Breast epithelium (tissue), 4 donors: ENCODE measurements at regions of chr14 and their contacts with region 1.

Region 1: DNA sequence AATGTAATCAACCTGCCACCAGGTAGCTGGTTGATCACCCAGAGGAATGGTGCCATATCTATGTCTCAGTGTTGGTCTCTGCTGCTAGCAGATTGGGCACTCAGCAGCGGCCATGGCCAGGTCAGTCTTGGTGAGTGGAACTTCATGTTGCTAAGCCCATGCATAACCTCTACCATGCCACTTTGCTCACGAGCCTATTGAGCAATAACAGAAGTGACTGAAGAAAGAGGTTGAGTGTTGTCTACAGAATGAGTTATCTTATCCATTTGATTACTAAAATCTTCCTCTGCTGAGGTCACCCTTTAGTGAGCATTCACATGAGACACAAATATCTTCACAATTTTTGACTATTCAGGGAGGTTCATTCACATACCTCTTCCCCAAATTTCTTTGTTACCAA is 1224.6 kb downstream of the FSCB start:
- DNase-seq: no peak
- H3K4me3 ChIP-seq: no peak overlapping the region
- H3K27ac ChIP-seq: no peak overlapping the region
- H3K4me1 ChIP-seq: no peaks in the 10 kb centered on the region
- H3K27me3 ChIP-seq: no peaks in the 10 kb centered on the region
- CTCF ChIP-seq: no peak
- POLR2A ChIP-seq: no peak

Region 2: GRCh38 chr14:43200519-43200918 is 81.9 kb before region 1 on chr14:
- intact Hi-C with region 1: no loop called
- DNase-seq: no peak
- H3K4me3 ChIP-seq: no peak overlapping the region
- H3K27ac ChIP-seq: no peak overlapping the region
- H3K4me1 ChIP-seq: no peaks in the 10 kb centered on the region
- H3K27me3 ChIP-seq: no peaks in the 10 kb centered on the region
- CTCF ChIP-seq: no peak
- POLR2A ChIP-seq: no peak

Region 3: DNA sequence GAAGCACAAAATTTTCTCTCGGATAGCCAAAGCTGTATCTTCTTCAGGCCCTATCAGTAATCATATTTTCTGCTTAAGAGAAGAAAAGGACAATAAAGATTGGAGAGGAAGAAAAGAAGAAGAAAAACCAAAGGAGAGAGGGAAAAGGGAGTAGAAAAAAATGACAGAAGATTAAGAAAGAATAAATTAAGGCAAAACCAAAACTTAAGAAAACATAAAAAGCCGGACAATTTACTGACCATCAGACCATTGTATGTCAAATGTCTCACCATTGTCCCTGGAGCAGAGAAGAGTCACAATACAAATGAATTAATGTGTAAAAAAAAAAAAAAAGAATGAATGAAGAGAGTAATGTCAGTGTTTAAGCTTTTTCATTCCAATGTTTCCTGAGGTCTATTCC is 50.2 kb before region 1 on chr14:
- intact Hi-C with region 1: loop called (anchors 2 kb)
- DNase-seq: no peak
- H3K4me3 ChIP-seq: no peak overlapping the region
- H3K27ac ChIP-seq: no peak overlapping the region
- H3K4me1 ChIP-seq: no peaks in the 10 kb centered on the region
- H3K27me3 ChIP-seq: no peaks in the 10 kb centered on the region
- CTCF ChIP-seq: no peak
- POLR2A ChIP-seq: no peak